Thyroid gland (tissue), 4 donors: ENCODE measurements at regions of chr14 and their contacts with region 1.

Region 1: DNA sequence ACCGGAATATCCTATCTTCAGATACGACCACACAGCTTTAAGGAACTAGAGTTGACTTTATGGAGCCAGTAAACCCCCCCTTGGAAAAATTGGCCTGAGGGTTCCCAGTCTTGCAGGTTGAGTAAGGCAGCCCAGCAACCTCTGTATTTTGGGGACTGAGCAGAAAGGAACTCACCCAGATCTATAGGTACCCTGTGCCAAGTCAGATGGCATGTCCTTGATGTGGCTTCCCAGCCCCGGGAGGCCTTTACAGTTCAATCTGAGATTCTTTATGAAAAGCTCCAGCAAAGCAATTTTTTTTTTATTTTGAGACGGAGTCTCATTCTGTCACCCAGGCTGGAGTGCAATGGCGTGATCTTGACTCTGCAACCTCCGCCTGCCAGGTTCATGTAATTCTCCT is 27.6 kb downstream of the TMEM121 start:
- DNase-seq: no peak
- H3K4me3 ChIP-seq: no peak overlapping the region
- H3K27ac ChIP-seq: no peak overlapping the region
- H3K4me1 ChIP-seq: no peaks in the 10 kb centered on the region
- H3K27me3 ChIP-seq: no peaks in the 10 kb centered on the region
- CTCF ChIP-seq: no peak
- POLR2A ChIP-seq: no peak

Region 2: DNA sequence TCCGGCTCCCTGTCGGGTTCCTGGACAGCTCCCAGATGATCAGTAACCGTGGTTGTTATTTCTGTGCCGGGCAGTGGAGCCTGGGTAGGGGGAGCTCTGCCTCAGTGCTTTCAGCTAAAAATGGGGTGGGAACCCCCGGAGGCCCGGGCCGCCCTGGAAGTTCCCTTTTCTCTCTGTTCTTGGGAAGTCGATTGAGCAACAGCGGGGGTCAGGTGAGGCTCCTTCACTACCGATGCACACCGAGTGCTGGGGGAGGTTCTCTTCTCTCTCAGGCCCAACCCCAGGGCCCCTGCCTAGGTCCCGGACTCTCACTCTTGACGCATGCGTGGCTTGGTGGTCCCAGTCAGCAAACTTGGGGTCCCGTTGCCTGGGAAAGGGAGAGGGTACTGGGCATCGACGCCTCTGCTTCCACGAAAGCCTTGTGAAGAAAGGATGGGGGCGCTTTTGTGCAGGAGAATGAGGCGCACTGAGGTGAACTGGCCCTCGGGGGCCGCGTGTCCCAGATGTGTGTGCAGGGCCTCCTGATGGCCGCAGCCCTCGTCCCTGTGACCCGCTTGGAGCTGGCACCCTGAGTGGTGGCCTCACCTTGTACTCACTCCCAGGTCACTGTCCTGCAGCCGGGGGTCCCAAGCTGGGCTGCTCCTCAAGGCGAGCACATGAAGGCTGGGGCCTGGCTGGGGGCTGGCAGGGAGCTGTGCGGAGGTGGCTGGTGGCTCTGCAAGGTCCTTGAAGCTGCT is 51.2 kb after region 1 on chr14:
- intact Hi-C with region 1: no loop called
- DNase-seq: peak; percentile 55 to 67
- H3K4me3 ChIP-seq: no peak overlapping the region
- H3K27ac ChIP-seq: no peak overlapping the region
- H3K4me1 ChIP-seq: no peaks in the 10 kb centered on the region
- H3K27me3 ChIP-seq: no peaks in the 10 kb centered on the region
- CTCF ChIP-seq: no peak
- POLR2A ChIP-seq: no peak

Region 3: GRCh38 chr14:105622322-105622955 is 68.4 kb after region 1 on chr14:
- intact Hi-C with region 1: no loop called
- DNase-seq: no peak
- H3K4me3 ChIP-seq: no peak overlapping the region
- H3K27ac ChIP-seq: no peak overlapping the region
- H3K4me1 ChIP-seq: peaks cover 4 to 17% of the 10 kb centered on the region in 2 donors
- H3K27me3 ChIP-seq: no peaks in the 10 kb centered on the region
- CTCF ChIP-seq: no peak
- POLR2A ChIP-seq: no peak

Region 4: GRCh38 chr14:105944632-105945610 is 390.9 kb after region 1 on chr14:
- intact Hi-C with region 1: loop called (anchors 10 kb)
- DNase-seq: peak; percentile 79 to 85
- H3K4me3 ChIP-seq: no peak overlapping the region
- H3K27ac ChIP-seq: no peak overlapping the region
- H3K4me1 ChIP-seq: peaks cover 0 to 4% of the 10 kb centered on the region in 2 donors
- H3K27me3 ChIP-seq: no peaks in the 10 kb centered on the region
- CTCF ChIP-seq: peak; percentile 52 to 95 (median 76)
- POLR2A ChIP-seq: no peak